ENCODE measurements at regions of chr13 and their contacts with region 1.

Region 1: GRCh38 chr13:80559944-80560343 is 219.0 kb upstream of the SPRY2 start:
- DNase-seq: no peak
- H3K4me3 ChIP-seq: no peak overlapping the region
- H3K27ac ChIP-seq: no peak overlapping the region
- H3K4me1 ChIP-seq: peaks cover 18% of the 10 kb centered on the region
- H3K27me3 ChIP-seq: no peaks in the 10 kb centered on the region
- CTCF ChIP-seq: no peak

Region 2: DNA sequence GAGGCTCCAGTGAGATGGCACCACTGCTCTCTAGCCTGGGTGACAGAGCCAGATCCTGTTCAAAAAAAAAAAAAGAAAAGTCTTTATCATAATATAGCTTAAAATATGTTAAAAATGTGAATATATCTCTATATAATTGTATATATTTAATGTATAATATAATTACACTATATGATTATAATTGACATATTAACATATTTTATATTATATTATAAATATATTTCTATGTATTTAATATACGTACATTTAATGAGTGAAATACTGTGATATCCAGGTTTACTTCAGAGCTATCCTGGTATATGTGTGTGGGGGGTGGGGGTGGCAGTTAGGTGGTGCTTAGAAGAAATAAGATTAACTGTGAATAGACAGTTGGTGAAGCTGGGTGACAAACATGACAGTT is 183.4 kb before region 1 on chr13:
- CTCF ChIA-PET with region 1: no interaction called
- POLR2A ChIA-PET with region 1: interaction called, 22 read pairs
- intact Hi-C with region 1: no loop called
- DNase-seq: no peak
- H3K4me3 ChIP-seq: no peak overlapping the region
- H3K27ac ChIP-seq: no peak overlapping the region
- H3K4me1 ChIP-seq: no peaks in the 10 kb centered on the region
- H3K27me3 ChIP-seq: no peaks in the 10 kb centered on the region
- CTCF ChIP-seq: no peak

Region 3: DNA sequence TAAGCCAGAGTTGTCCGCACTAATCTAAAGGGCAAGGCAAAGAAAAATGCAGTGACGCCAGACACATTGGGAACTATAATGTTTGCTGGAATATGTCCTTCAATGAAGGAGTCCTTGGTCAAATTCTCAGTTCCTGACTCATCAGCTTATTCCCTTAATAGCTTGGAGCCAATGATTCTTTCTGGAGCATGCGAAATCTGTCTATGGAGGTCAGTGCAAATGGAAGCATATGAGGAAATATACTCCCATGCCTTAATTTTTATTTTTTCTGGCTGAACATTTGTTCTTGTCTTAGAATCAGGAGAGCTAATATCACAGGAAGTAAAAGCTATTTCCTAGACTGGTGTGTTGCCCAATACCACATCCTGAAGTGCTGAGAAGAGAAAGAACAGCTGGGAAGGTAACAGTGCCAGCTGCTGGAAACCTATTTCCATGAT is 70.8 kb after region 1 on chr13:
- CTCF ChIA-PET with region 1: no interaction called
- POLR2A ChIA-PET with region 1: no interaction called
- intact Hi-C with region 1: no loop called
- DNase-seq: peak; percentile 40
- H3K4me3 ChIP-seq: no peak overlapping the region
- H3K27ac ChIP-seq: no peak overlapping the region
- H3K4me1 ChIP-seq: no peaks in the 10 kb centered on the region
- H3K27me3 ChIP-seq: no peaks in the 10 kb centered on the region
- CTCF ChIP-seq: no peak

Region 4: DNA sequence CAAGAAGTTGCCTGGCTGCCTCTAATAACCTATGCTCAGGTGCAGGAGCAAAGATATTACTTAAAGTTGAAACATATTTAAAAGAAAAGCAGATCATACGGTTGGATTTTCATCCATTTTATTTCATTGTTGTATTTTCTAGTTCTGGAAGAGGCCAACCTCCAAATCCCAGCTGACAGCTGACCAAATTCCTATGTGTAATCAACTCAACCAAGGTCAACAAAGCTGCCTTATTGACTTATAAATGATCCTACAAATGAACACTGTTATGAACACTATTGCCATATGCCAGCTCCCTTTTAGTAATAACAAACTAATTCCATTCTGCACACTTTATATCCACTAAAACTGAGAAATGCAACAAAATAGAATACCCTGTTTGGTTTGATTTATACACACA is 1784.9 kb after region 1 on chr13:
- CTCF ChIA-PET with region 1: no interaction called
- POLR2A ChIA-PET with region 1: no interaction called
- intact Hi-C with region 1: no loop called
- DNase-seq: no peak
- H3K4me3 ChIP-seq: no peak overlapping the region
- H3K27ac ChIP-seq: no peak overlapping the region
- H3K4me1 ChIP-seq: no peaks in the 10 kb centered on the region
- H3K27me3 ChIP-seq: no peaks in the 10 kb centered on the region
- CTCF ChIP-seq: no peak

Measured in A673 (cell line).